ENCODE measurements at regions of chr1 and their contacts with region 1.

Region 1: GRCh38 chr1:27643701-27644625 is 9.0 kb upstream of the FGR start:
- DNase-seq: peak; percentile 75
- ATAC-seq: peak; percentile 96
- H3K4me3 Mint-ChIP-seq: no peak overlapping the region
- H3K27ac Mint-ChIP-seq: no peak overlapping the region
- H3K4me1 Mint-ChIP-seq: peaks cover 6% of the 10 kb centered on the region
- H3K27me3 Mint-ChIP-seq: no peaks in the 10 kb centered on the region
- CTCF ChIP-seq: peak; percentile 79

Region 2: GRCh38 chr1:27616441-27616840 is 27.5 kb before region 1 on chr1:
- CTCF ChIA-PET with region 1: interaction called, 35 read pairs
- POLR2A ChIA-PET with region 1: no interaction called
- DNase-seq: no peak
- ATAC-seq: peak; percentile 6; the same call in 1 of the 2 replicates
- H3K4me3 Mint-ChIP-seq: peak overlapping the region; percentile 48
- H3K27ac Mint-ChIP-seq: no peak overlapping the region
- H3K4me1 Mint-ChIP-seq: peaks cover 15% of the 10 kb centered on the region
- H3K27me3 Mint-ChIP-seq: peaks cover 15% of the 10 kb centered on the region
- CTCF ChIP-seq: no peak

Region 3: GRCh38 chr1:27628712-27629111 is 15.3 kb before region 1 on chr1:
- CTCF ChIA-PET with region 1: interaction called, 10 read pairs
- POLR2A ChIA-PET with region 1: no interaction called
- DNase-seq: no peak
- ATAC-seq: no peak
- H3K4me3 Mint-ChIP-seq: no peak overlapping the region
- H3K27ac Mint-ChIP-seq: no peak overlapping the region
- H3K4me1 Mint-ChIP-seq: peaks cover 35% of the 10 kb centered on the region
- H3K27me3 Mint-ChIP-seq: peaks cover 18% of the 10 kb centered on the region
- CTCF ChIP-seq: no peak

Region 4: GRCh38 chr1:27656157-27656893 is 12.4 kb after region 1 on chr1:
- CTCF ChIA-PET with region 1: interaction called, 26 read pairs
- POLR2A ChIA-PET with region 1: no interaction called
- DNase-seq: peak; percentile 70
- ATAC-seq: peak; percentile 57
- H3K4me3 Mint-ChIP-seq: no peak overlapping the region
- H3K27ac Mint-ChIP-seq: peak overlapping the region; percentile 79
- H3K4me1 Mint-ChIP-seq: peaks cover 37% of the 10 kb centered on the region
- H3K27me3 Mint-ChIP-seq: peaks cover 3% of the 10 kb centered on the region; the same call in 1 of the 2 replicates
- CTCF ChIP-seq: no peak